ENCODE measurements at regions of chr4 and their contacts with region 1.

Region 1: GRCh38 chr4:8176547-8177399 is 18.2 kb upstream of the ABLIM2 start:
- DNase-seq: peak; percentile 49 to 60 (median 52)
- ATAC-seq: peak; percentile 96
- H3K4me3 ChIP-seq: no peak overlapping the region
- H3K27ac ChIP-seq: no peak overlapping the region
- H3K4me1 ChIP-seq: peaks cover 0 to 5% of the 10 kb centered on the region in 2 experiments; a peak in 2 of 5 replicates
- H3K27me3 ChIP-seq: peaks cover 4 to 29% of the 10 kb centered on the region in 2 experiments; a peak in 3 of 5 replicates
- CTCF ChIP-seq: peak; percentile 79 to 87 (median 84)
- EP300 ChIP-seq: no peak
- POLR2A ChIP-seq: no peak
- RAD21 ChIP-seq: peak; percentile 86 to 93

Region 2: GRCh38 chr4:7569810-7570773 is 606.7 kb before region 1 on chr4:
- CTCF ChIA-PET with region 1: no interaction called
- POLR2A ChIA-PET with region 1: no interaction called
- in situ Hi-C with region 1: no loop called
- intact Hi-C with region 1: no loop called
- DNase-seq: no peak
- ATAC-seq: no peak
- H3K4me3 ChIP-seq: no peak overlapping the region
- H3K27ac ChIP-seq: no peak overlapping the region
- H3K4me1 ChIP-seq: no peaks in the 10 kb centered on the region
- H3K27me3 ChIP-seq: 0 out of 5 replicates have a peak, but pooled peaks cover 0 to 3% of the 10 kb centered on the region in 2 experiments
- CTCF ChIP-seq: no peak
- EP300 ChIP-seq: no peak
- POLR2A ChIP-seq: no peak
- RAD21 ChIP-seq: no peak

Region 3: DNA sequence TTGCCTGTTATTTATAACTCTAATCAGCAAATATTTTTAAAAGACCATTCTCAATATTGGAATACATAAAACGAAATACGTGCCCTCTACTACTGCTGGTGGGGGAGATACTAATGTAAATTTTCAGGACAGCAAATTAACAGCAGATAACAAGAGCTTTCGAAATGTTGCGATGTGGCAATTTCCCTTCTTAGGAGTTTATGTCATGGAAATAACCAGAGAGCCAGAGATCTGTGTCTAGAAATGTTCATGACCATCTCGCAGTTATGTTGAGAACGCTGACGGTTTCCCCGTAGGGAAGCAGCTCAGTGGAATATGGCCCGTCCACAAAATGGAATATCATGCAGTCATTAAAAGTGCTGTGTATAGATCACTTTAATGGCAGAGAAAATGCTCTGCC is 503.7 kb before region 1 on chr4:
- CTCF ChIA-PET with region 1: no interaction called
- POLR2A ChIA-PET with region 1: no interaction called
- in situ Hi-C with region 1: no loop called
- intact Hi-C with region 1: no loop called
- DNase-seq: no peak
- ATAC-seq: no peak
- H3K4me3 ChIP-seq: no peak overlapping the region
- H3K27ac ChIP-seq: no peak overlapping the region
- H3K4me1 ChIP-seq: no peaks in the 10 kb centered on the region
- H3K27me3 ChIP-seq: peaks cover 3 to 17% of the 10 kb centered on the region in 2 experiments; a peak in 3 of 5 replicates
- CTCF ChIP-seq: no peak
- EP300 ChIP-seq: no peak
- POLR2A ChIP-seq: no peak
- RAD21 ChIP-seq: no peak

Region 4: GRCh38 chr4:7785017-7785416 is 391.8 kb before region 1 on chr4:
- CTCF ChIA-PET with region 1: no interaction called
- POLR2A ChIA-PET with region 1: no interaction called
- in situ Hi-C with region 1: no loop called
- intact Hi-C with region 1: no loop called
- DNase-seq: no peak
- ATAC-seq: no peak
- H3K4me3 ChIP-seq: no peak overlapping the region
- H3K27ac ChIP-seq: no peak overlapping the region
- H3K4me1 ChIP-seq: no peaks in the 10 kb centered on the region; a peak in 2 of 5 replicates
- H3K27me3 ChIP-seq: peaks cover 5 to 40% of the 10 kb centered on the region in 2 experiments; a peak in 4 of 5 replicates
- CTCF ChIP-seq: no peak
- EP300 ChIP-seq: no peak
- POLR2A ChIP-seq: no peak
- RAD21 ChIP-seq: no peak

Region 5: GRCh38 chr4:8192748-8193738 is 16.3 kb after region 1 on chr4:
- CTCF ChIA-PET with region 1: interaction called, 18 read pairs
- POLR2A ChIA-PET with region 1: interaction called, 6 read pairs
- in situ Hi-C with region 1: no loop called
- intact Hi-C with region 1: no loop called
- DNase-seq: peak in 1 of 4 experiments; percentile 18
- ATAC-seq: peak; percentile 48
- H3K4me3 ChIP-seq: no peak overlapping the region
- H3K27ac ChIP-seq: no peak overlapping the region
- H3K4me1 ChIP-seq: peaks cover 2 to 25% of the 10 kb centered on the region in 2 experiments; a peak in 2 of 5 replicates
- H3K27me3 ChIP-seq: peaks cover 0 to 59% of the 10 kb centered on the region in 2 experiments; a peak in 2 of 5 replicates
- CTCF ChIP-seq: peak in 2 of 3 experiments; percentile 15 to 42; a peak in 2 of 6 replicates
- EP300 ChIP-seq: no peak
- POLR2A ChIP-seq: no peak
- RAD21 ChIP-seq: peak; percentile 35 to 62; a peak in 3 of 4 replicates